ENCODE measurements at regions of chr20 and their contacts with region 1.

Region 1: DNA sequence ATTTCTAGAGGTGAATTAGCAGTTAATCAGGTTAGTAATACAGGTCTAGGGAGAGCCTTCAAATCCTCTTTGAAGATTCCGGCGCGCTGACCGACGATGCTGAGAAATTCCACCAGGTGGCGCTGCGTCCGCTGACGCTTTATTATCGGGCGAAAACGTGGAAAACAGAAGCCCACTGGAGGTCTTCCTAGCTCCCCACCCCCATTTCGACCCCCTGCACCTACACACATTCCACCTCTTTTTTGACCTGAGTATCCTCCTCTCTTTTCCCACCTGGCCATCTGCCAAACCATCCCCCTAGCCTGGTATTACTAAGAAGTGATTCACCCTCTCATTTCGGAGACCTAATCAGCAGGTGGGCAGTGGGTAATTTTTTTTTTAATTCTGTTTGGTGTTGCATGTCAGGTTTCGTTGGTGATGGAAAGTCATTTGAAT is 65.4 kb upstream of the RIN2 start:
- DNase-seq: peak; percentile 58
- H3K4me3 Mint-ChIP-seq: no peak overlapping the region
- H3K27ac Mint-ChIP-seq: peak overlapping the region; percentile 39
- H3K4me1 Mint-ChIP-seq: peaks cover 23% of the 10 kb centered on the region
- H3K27me3 Mint-ChIP-seq: no peaks in the 10 kb centered on the region
- CTCF ChIP-seq: peak; percentile 92

Region 2: DNA sequence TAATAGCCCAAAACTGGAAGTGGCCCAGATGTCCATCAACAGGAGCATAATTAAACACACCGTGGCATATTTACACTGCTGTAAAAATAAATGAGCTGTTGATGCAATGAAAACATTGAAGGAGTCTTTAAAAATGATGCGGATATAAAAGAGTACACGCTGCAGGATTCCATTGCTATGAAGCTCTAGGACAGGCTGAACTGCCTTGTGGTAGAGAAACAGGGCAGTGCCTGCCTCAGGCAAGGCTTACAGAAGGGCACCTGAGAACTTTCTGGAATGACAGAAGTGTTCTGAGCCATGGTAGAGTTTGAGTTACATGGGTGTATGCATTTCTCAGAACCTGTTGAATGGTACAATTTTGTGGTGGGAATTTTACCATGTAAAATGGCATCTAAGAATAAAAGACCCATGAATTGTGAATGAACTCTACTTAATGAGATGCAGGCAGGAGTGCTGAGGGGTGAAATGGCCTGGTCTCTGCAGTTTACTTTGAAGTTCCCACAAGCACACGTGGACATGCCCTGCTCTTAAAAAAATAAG is 20.1 kb after region 1 on chr20:
- CTCF ChIA-PET with region 1: interaction called, 20 read pairs
- POLR2A ChIA-PET with region 1: interaction called, 3 read pairs
- intact Hi-C with region 1: no loop called
- DNase-seq: no peak
- H3K4me3 Mint-ChIP-seq: no peak overlapping the region
- H3K27ac Mint-ChIP-seq: no peak overlapping the region
- H3K4me1 Mint-ChIP-seq: no peaks in the 10 kb centered on the region
- H3K27me3 Mint-ChIP-seq: no peaks in the 10 kb centered on the region
- CTCF ChIP-seq: no peak

Region 3: GRCh38 chr20:19757487-19758132 is 64.9 kb after region 1 on chr20:
- CTCF ChIA-PET with region 1: interaction called, 9 read pairs
- POLR2A ChIA-PET with region 1: interaction called, 4 read pairs
- intact Hi-C with region 1: loop called (anchors 1 kb)
- DNase-seq: peak; percentile 68
- H3K4me3 Mint-ChIP-seq: peak overlapping the region; percentile 81
- H3K27ac Mint-ChIP-seq: peak overlapping the region; percentile 70
- H3K4me1 Mint-ChIP-seq: peaks cover 35% of the 10 kb centered on the region
- H3K27me3 Mint-ChIP-seq: no peaks in the 10 kb centered on the region
- CTCF ChIP-seq: no peak

Region 4: GRCh38 chr20:19802492-19803158 is 109.9 kb after region 1 on chr20:
- CTCF ChIA-PET with region 1: interaction called, 11 read pairs
- POLR2A ChIA-PET with region 1: no interaction called
- intact Hi-C with region 1: no loop called
- DNase-seq: peak; percentile 72
- H3K4me3 Mint-ChIP-seq: no peak overlapping the region
- H3K27ac Mint-ChIP-seq: peak overlapping the region; percentile 9
- H3K4me1 Mint-ChIP-seq: peaks cover 18% of the 10 kb centered on the region
- H3K27me3 Mint-ChIP-seq: no peaks in the 10 kb centered on the region
- CTCF ChIP-seq: peak; percentile 21

Region 5: DNA sequence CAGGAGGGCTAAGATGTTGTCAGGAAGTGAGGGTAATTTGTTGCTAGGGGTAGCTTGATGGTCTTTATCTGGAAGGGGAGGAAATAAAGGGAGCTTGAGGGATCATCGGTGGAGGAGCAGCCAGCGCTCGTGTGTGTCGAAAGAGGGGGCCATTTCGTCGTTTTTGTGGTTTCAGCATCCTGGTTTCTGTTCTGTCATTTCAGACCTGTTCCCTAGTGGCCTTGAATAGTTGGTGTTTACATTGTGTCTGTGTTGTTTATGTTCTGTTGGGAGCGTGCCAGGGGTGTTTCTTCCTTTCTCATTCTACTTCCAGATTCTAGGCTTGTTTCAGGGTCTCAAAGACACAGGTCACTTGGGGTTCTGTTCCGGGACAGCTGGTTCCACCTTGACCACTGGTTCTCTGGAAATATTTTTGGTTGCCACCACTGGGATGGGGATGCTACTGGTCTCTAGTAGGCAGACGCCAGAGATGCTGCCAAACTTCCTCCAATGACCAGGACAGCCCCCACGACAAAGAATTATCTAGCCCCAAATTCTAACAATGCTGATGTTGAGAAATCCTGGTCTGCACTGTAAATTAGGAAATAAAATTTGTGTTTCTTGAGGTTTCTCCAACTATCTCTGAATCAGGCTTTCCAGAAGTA is 210.6 kb after region 1 on chr20:
- CTCF ChIA-PET with region 1: no interaction called
- POLR2A ChIA-PET with region 1: no interaction called
- intact Hi-C with region 1: loop called (anchors 1 kb)
- DNase-seq: peak; percentile 30
- H3K4me3 Mint-ChIP-seq: no peak overlapping the region
- H3K27ac Mint-ChIP-seq: no peak overlapping the region
- H3K4me1 Mint-ChIP-seq: peaks cover 5% of the 10 kb centered on the region
- H3K27me3 Mint-ChIP-seq: no peaks in the 10 kb centered on the region
- CTCF ChIP-seq: no peak

Region 6: DNA sequence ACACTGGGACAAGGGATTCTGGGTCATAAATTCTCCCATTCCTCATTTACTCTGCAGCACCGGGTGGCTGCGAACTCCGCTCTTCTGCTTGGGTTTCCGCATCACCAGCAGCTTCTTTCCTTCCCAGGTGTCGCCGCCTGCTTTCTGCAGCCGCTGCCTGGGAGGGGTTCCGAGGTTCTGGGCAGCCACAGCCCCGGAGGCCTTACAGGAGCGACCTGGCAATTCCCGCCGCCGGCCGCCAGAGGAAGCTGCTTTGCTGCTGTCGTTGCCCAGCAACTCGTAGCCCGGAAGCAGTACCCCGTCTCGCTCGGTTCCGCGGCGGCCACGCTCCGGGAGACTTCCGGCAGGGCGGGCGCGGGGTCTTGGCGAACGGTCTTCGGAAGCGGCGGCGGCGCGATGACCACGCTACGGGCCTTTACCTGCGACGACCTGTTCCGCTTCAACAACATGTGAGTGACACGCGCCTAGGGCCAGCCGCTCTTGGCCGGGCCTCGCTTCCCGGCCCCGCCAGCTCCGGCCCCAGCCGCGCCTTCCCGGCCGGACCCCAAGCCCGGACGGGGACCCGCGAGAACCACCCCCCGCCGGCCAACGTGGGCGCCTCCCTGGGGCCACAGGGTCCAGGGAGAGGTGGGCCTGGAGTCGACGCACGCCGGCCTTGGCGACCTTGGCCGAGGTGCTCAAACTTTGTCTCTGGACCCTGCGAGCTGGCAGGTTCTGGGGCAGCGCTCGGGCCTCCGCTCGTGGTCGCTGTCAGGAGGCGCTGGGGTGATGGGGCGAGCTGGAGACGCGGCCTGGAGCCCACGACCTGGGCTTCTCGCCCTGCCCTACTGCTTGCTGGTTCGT is 324.5 kb after region 1 on chr20 and contains the start of gene NAA20:
- CTCF ChIA-PET with region 1: interaction called, 8 read pairs
- POLR2A ChIA-PET with region 1: interaction called, 3 read pairs
- intact Hi-C with region 1: loop called (anchors 5 kb)
- DNase-seq: peak; percentile 91
- H3K4me3 Mint-ChIP-seq: peak within 1 kb of the TSS; percentile 73
- H3K27ac Mint-ChIP-seq: peak within 1 kb of the TSS; percentile 95
- H3K4me1 Mint-ChIP-seq: peaks cover 41% of the 10 kb centered on the region
- H3K27me3 Mint-ChIP-seq: no peaks in the 10 kb centered on the region
- CTCF ChIP-seq: peak; percentile 71
- total RNA-seq, gene NAA20: 109 and 126 TPM in 2 replicates